ENCODE measurements at regions of chr13 and their contacts with region 1.

Region 1: DNA sequence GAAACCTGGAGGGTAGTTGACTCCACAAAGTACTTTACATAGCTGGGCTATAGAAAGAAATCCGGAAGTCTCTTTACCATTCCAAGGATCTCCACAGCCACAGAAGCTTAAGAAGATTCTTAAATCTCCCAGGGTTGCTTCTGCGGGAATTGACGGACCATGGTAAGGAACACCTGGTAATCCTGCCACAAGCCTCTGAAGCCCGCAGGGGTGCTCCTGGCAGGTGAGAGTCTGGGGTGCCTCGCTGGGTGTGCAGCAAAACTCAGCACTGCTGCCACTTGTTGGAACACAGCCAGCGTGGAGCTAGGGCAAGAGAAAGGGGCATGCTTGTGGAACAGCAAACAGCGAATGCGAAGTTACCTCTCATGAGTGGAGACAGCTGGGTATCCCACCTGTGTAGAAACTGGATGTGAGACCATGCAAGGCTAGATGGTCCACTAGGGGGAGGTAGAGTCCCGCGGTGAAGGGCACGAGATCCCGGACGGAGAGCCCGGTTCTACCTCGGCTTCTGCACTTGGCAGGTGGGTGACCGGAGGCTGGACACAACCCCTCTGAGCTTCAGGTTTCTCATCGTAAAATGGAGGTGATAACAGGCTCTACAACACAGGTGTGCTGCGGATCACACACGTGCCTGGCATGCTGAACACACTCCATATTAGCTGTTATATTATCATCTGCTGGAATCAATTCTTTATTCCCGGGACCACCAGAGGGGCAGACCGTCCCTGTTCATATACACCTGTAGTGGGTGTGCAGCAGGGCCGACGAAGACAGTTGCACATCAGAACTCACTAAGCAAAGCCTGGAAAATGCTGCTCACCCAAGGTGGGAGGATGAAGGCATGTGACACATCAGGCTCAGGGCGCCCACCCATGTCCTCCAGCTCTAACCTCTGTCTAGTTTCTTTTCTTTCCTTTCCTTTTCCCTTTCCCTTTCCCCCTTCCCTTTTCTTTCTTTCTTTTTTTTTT is 24.1 kb upstream of the UBAC2 start:
- DNase-seq: peak; percentile 58 to 87 (median 82)
- ATAC-seq: peak; percentile 93
- H3K4me3 ChIP-seq: peak overlapping the region in 1 of 2 experiments; percentile 25
- H3K4me3 Mint-ChIP-seq: peak overlapping the region; percentile 72
- H3K27ac ChIP-seq: no peak overlapping the region
- H3K27ac Mint-ChIP-seq: peak overlapping the region; percentile 64
- H3K4me1 ChIP-seq: peaks cover 43% of the 10 kb centered on the region
- H3K4me1 Mint-ChIP-seq: peaks cover 45% of the 10 kb centered on the region
- H3K27me3 ChIP-seq: no peaks in the 10 kb centered on the region
- H3K27me3 Mint-ChIP-seq: no peaks in the 10 kb centered on the region
- CTCF ChIP-seq: peak; percentile 80

Region 2: GRCh38 chr13:99165753-99166587 is 10.6 kb before region 1 on chr13:
- CTCF ChIA-PET with region 1: interaction called, 19 read pairs
- POLR2A ChIA-PET with region 1: no interaction called
- intact Hi-C with region 1: no loop called
- DNase-seq: no peak
- ATAC-seq: no peak
- H3K4me3 ChIP-seq: no peak overlapping the region
- H3K4me3 Mint-ChIP-seq: no peak overlapping the region
- H3K27ac ChIP-seq: no peak overlapping the region
- H3K27ac Mint-ChIP-seq: no peak overlapping the region
- H3K4me1 ChIP-seq: no peaks in the 10 kb centered on the region
- H3K4me1 Mint-ChIP-seq: no peaks in the 10 kb centered on the region
- H3K27me3 ChIP-seq: no peaks in the 10 kb centered on the region
- H3K27me3 Mint-ChIP-seq: no peaks in the 10 kb centered on the region
- CTCF ChIP-seq: no peak

Region 3: GRCh38 chr13:99250982-99251825 is 74.6 kb after region 1 on chr13:
- CTCF ChIA-PET with region 1: interaction called, 42 read pairs
- POLR2A ChIA-PET with region 1: no interaction called
- intact Hi-C with region 1: no loop called
- DNase-seq: no peak
- ATAC-seq: no peak
- H3K4me3 ChIP-seq: no peak overlapping the region
- H3K4me3 Mint-ChIP-seq: no peak overlapping the region
- H3K27ac ChIP-seq: peak overlapping the region in 1 of 2 experiments; percentile 0
- H3K27ac Mint-ChIP-seq: peak overlapping the region; percentile 79
- H3K4me1 ChIP-seq: peaks cover 51% of the 10 kb centered on the region
- H3K4me1 Mint-ChIP-seq: peaks cover 75% of the 10 kb centered on the region
- H3K27me3 ChIP-seq: no peaks in the 10 kb centered on the region
- H3K27me3 Mint-ChIP-seq: no peaks in the 10 kb centered on the region
- CTCF ChIP-seq: no peak

Region 4: GRCh38 chr13:99307648-99308339 is 131.2 kb after region 1 on chr13:
- CTCF ChIA-PET with region 1: interaction called, 10 read pairs
- POLR2A ChIA-PET with region 1: no interaction called
- intact Hi-C with region 1: no loop called
- DNase-seq: peak in 5 of 9 experiments; percentile 38 to 63 (median 50)
- ATAC-seq: peak; percentile 57
- H3K4me3 ChIP-seq: peak overlapping the region in 1 of 2 experiments; percentile 53
- H3K4me3 Mint-ChIP-seq: peak overlapping the region; percentile 93
- H3K27ac ChIP-seq: peak overlapping the region; percentile 13 to 65
- H3K27ac Mint-ChIP-seq: peak overlapping the region; percentile 89
- H3K4me1 ChIP-seq: peaks cover 67% of the 10 kb centered on the region
- H3K4me1 Mint-ChIP-seq: peaks cover 81% of the 10 kb centered on the region
- H3K27me3 ChIP-seq: no peaks in the 10 kb centered on the region
- H3K27me3 Mint-ChIP-seq: no peaks in the 10 kb centered on the region
- CTCF ChIP-seq: no peak